Ovary (tissue), 10 donors: ENCODE measurements at regions of chr5 and their contacts with region 1.

Region 1: GRCh38 chr5:150227606-150228273 is 37.9 kb downstream of the SLC6A7 start:
- DNase-seq: no peak
- H3K4me3 ChIP-seq: no peak overlapping the region
- H3K27ac ChIP-seq: no peak overlapping the region
- H3K4me1 ChIP-seq: no peaks in the 10 kb centered on the region
- H3K27me3 ChIP-seq: no peaks in the 10 kb centered on the region
- CTCF ChIP-seq: no peak
- EP300 ChIP-seq: no peak
- POLR2A ChIP-seq: no peak

Region 2: GRCh38 chr5:150340614-150341255 is 113.0 kb after region 1 on chr5:
- intact Hi-C with region 1: loop called in 1 of 4 experiments (anchors 10 kb)
- DNase-seq: no peak
- H3K4me3 ChIP-seq: no peak overlapping the region
- H3K27ac ChIP-seq: no peak overlapping the region
- H3K4me1 ChIP-seq: no peaks in the 10 kb centered on the region
- H3K27me3 ChIP-seq: no peaks in the 10 kb centered on the region
- CTCF ChIP-seq: no peak
- EP300 ChIP-seq: no peak
- POLR2A ChIP-seq: no peak